OCI-LY7 (cell line): ENCODE measurements at regions of chr15 and their contacts with region 1.

Region 1: GRCh38 chr15:64893481-64894394 is 18.0 kb upstream of the ANKDD1A start:
- DNase-seq: peak; percentile 100
- H3K4me3 ChIP-seq: peak overlapping the region; percentile 72
- H3K27ac ChIP-seq: peak overlapping the region; percentile 95
- H3K4me1 ChIP-seq: peaks cover 62% of the 10 kb centered on the region
- CTCF ChIP-seq: no peak

Region 2: GRCh38 chr15:63473999-63474809 is 1419.5 kb before region 1 on chr15:
- CTCF ChIA-PET with region 1: no interaction called
- POLR2A ChIA-PET with region 1: no interaction called
- intact Hi-C with region 1: loop called (anchors 10 kb)
- DNase-seq: peak; percentile 76
- H3K4me3 ChIP-seq: peak overlapping the region; percentile 45
- H3K27ac ChIP-seq: peak overlapping the region; percentile 88
- H3K4me1 ChIP-seq: peaks cover 64% of the 10 kb centered on the region
- CTCF ChIP-seq: peak; percentile 45; the same call in 1 of the 2 replicates

Region 3: DNA sequence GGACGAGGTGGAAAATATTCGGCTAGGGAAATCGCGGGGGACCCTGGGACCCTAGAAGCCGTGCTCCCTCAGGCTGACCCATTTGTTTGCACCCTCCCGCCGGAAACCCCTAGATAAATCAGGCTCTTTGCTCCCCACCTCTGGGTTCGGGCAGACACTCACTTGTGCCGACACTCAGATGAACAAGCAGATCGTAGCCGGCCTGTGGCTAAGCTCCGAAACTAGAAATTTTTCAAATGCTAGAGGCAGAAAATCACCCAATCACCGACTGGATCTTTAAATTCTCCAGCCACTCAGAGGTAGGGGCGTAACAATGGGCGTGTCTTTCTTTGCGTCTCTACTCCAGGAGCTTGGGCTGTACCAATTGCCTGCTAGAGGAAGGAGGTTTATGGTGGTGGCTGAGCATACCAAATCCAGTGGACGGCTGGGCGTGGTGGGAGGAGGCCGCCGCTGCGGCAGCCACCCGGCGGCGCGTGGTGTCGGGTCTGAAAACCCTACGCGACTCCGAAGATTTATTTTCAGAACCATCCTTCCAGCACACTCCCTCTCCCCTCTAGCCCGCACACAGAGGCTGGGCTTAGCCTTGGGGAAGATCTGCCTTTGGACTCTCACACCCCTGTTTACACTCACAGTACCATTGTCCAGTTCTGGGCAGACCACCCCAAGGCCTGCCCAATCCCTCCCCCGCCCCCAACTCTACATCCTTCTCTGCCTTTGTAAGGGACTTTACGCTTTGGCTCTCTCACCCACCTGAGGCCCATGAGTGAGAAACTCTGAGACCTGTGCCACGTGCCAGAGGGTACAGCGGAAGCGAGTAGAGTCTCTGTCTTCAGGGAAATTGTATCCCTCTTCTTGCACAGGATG is 68.1 kb before region 1 on chr15 and contains the start of gene PIF1:
- CTCF ChIA-PET with region 1: interaction called, 3 read pairs
- POLR2A ChIA-PET with region 1: interaction called, 21 read pairs
- intact Hi-C with region 1: loop called (anchors 1 kb)
- DNase-seq: peak; percentile 100
- H3K4me3 ChIP-seq: peak within 1 kb of the TSS; percentile 95
- H3K27ac ChIP-seq: peak within 1 kb of the TSS; percentile 87
- H3K4me1 ChIP-seq: peaks cover 35% of the 10 kb centered on the region
- CTCF ChIP-seq: 0 out of 2 replicates have a peak, but pooled peaks have one; percentile 10
- total RNA-seq, gene PIF1: 78.0 and 82.9 TPM in 2 replicates

Region 4: GRCh38 chr15:64841258-64842095 is 52.3 kb before region 1 on chr15 and contains the start of gene PLEKHO2:
- CTCF ChIA-PET with region 1: no interaction called
- POLR2A ChIA-PET with region 1: interaction called, 13 read pairs
- intact Hi-C with region 1: loop called (anchors 1 kb)
- DNase-seq: peak; percentile 94
- H3K4me3 ChIP-seq: peak within 1 kb of the TSS; percentile 92
- H3K27ac ChIP-seq: peak within 1 kb of the TSS; percentile 56
- H3K4me1 ChIP-seq: peaks cover 64% of the 10 kb centered on the region
- CTCF ChIP-seq: peak; percentile 59
- total RNA-seq, gene PLEKHO2: 10.1 and 12.0 TPM in 2 replicates

Region 5: GRCh38 chr15:64905119-64905831 is 11.5 kb after region 1 on chr15:
- CTCF ChIA-PET with region 1: interaction called, 5 read pairs
- POLR2A ChIA-PET with region 1: interaction called, 14 read pairs
- intact Hi-C with region 1: no loop called
- DNase-seq: peak; percentile 69
- H3K4me3 ChIP-seq: peak overlapping the region; percentile 41
- H3K27ac ChIP-seq: no peak overlapping the region
- H3K4me1 ChIP-seq: peaks cover 10% of the 10 kb centered on the region
- CTCF ChIP-seq: peak; percentile 85

Region 6: GRCh38 chr15:65298731-65299130 is 405.0 kb after region 1 on chr15:
- CTCF ChIA-PET with region 1: no interaction called
- POLR2A ChIA-PET with region 1: no interaction called
- intact Hi-C with region 1: loop called (anchors 5 kb)
- DNase-seq: no peak
- H3K4me3 ChIP-seq: no peak overlapping the region
- H3K27ac ChIP-seq: no peak overlapping the region
- H3K4me1 ChIP-seq: peaks cover 29% of the 10 kb centered on the region
- CTCF ChIP-seq: no peak